Activated T-helper 1 cell treated with anti-CD3 and anti-CD28 coated beads, Interleukin-12 subunit alpha, Interleukin-12 subunit beta, Interleukin-2, Interleukin-4 antibody, amounts not matched to agents 30 ng/mL and 10 ng/mL and 1 ng/mL, durations not matched to agents 14 hours and 24 hours and 36 hours (primary cell): ENCODE measurements at regions of chr4 and their contacts with region 1.

Region 1: DNA sequence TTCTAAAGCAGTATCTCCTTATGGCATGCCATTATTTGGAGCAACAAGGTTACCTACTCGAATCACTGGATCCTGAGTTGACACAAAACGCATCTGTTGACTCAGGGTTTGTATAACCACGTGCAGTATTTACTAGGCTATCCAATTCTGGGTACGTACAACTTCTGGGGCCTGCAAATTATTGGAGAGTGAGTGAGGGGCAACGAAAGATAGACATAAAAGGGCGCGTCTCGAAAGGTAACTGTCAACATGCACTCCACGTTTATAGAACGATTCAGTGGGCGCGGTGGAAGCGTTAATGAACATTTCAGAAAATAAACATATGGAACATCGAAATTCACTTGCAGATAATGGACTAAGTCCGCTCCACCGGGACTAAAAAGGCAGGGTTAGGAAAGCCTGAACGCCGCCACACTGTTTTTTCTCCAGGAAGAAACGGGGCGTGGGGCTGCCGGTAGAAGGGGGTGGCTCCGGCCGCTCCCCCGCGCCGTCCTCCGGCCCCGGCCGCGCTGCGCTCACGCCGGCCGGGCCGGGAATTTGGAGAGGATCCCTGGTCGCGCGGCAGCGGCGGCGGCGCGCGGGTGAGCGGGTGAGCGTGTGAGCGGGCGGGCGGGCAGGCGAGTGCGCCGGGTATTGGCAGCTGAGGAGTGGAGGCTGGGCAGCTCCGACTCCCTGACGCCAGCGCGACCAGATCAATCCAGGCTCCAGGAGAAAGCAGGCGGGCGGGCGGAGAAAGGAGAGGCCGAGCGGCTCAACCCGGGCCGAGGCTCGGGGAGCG is at the start of gene SMAD1:
- DNase-seq: peak; percentile 11
- H3K4me3 Mint-ChIP-seq: peak within 1 kb of the TSS; percentile 73
- H3K27ac Mint-ChIP-seq: peak within 1 kb of the TSS; percentile 49
- H3K4me1 Mint-ChIP-seq: peaks cover 6% of the 10 kb centered on the region
- H3K27me3 Mint-ChIP-seq: peaks cover 33% of the 10 kb centered on the region
- total RNA-seq, gene SMAD1: 3.1 and 3.2 TPM in 2 replicates

Region 2: DNA sequence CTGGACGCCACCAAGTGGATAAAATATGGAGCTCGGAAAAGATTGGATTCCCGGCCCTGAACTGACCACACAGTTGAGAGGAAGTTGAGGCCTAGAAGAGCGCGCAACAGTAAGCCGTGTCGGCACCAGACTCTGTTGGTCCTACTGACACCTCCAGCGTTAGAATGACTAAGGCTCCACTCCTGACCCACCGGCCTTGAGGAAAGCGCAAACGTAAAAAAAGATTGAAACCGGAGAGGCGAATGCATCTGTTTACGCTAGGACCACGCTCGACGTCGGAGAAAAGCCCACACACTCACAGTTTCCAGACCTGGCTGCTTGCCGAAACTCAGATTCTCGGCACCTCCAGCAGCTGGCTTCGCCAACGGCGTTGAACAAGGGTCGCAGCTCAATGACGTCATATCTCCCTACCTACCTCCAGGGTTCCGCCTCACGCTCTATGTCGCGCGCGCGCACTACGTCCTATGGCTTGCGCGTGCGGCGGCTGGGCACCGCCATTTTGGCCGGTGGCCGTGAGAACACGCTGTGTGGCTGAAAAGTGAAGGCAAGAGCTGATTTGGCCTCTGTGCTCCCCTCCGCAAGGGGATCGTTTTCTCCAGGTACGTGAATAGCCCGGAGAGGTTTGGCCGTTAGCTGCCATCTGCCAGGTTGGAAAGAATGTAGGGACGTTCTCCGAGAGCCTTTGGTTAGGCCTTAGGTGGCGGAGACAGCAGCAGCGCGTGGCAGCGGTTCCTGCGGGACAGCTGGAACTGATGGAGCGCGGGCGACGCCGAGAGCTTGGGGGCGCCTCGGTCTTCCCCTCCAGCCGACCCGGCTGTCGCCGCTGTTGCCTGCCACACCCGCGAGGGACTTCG is 383.3 kb before region 1 on chr4 and contains the starts of genes ABCE1 and ANAPC10:
- intact Hi-C with region 1: loop called (anchors 2 kb)
- DNase-seq: peak; percentile 94
- H3K4me3 Mint-ChIP-seq: peak within 1 kb of the TSS; percentile 92
- H3K27ac Mint-ChIP-seq: peak within 1 kb of the TSS; percentile 100
- H3K4me1 Mint-ChIP-seq: peaks cover 27% of the 10 kb centered on the region
- H3K27me3 Mint-ChIP-seq: no peaks in the 10 kb centered on the region
- total RNA-seq, gene ABCE1: 155 and 176 TPM in 2 replicates
- total RNA-seq, gene ANAPC10: 25.4 and 32.1 TPM in 2 replicates

Region 3: DNA sequence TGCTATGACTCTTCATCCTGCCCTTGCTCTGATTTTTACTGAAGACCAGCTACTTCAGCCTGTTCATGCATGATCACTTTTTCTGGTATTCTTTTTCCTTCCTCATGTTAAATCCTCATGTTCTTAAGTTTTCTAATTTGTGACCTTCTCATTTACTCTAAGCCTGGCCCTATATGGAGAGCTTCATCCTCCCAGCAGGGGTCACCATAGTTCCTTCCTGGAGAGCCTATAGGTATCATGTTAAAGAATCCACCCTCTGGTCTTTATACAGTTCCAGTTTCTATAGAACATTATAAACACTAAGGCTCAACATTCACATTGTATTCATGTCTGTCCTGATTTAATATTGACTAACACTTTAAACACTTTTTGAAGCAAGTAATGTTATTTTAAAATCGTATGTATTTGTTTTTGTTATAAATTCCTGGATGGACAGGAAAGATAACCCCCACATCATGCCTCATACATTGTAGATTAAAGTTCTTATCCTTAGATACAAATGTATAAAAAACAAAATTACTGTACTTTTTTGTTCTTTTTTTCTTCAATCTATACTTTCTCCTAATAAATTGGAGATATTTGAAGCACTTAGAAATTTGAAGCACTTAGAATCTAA is 247.2 kb before region 1 on chr4:
- intact Hi-C with region 1: loop called (anchors 5 kb)
- DNase-seq: peak; percentile 20
- H3K4me3 Mint-ChIP-seq: no peak overlapping the region
- H3K27ac Mint-ChIP-seq: no peak overlapping the region
- H3K4me1 Mint-ChIP-seq: no peaks in the 10 kb centered on the region
- H3K27me3 Mint-ChIP-seq: peaks cover 7% of the 10 kb centered on the region

Region 4: GRCh38 chr4:145299380-145300076 is 181.8 kb before region 1 on chr4:
- intact Hi-C with region 1: loop called (anchors 1 kb)
- DNase-seq: peak; percentile 2
- H3K4me3 Mint-ChIP-seq: no peak overlapping the region
- H3K27ac Mint-ChIP-seq: no peak overlapping the region
- H3K4me1 Mint-ChIP-seq: peaks cover 17% of the 10 kb centered on the region
- H3K27me3 Mint-ChIP-seq: peaks cover 6% of the 10 kb centered on the region

Region 5: DNA sequence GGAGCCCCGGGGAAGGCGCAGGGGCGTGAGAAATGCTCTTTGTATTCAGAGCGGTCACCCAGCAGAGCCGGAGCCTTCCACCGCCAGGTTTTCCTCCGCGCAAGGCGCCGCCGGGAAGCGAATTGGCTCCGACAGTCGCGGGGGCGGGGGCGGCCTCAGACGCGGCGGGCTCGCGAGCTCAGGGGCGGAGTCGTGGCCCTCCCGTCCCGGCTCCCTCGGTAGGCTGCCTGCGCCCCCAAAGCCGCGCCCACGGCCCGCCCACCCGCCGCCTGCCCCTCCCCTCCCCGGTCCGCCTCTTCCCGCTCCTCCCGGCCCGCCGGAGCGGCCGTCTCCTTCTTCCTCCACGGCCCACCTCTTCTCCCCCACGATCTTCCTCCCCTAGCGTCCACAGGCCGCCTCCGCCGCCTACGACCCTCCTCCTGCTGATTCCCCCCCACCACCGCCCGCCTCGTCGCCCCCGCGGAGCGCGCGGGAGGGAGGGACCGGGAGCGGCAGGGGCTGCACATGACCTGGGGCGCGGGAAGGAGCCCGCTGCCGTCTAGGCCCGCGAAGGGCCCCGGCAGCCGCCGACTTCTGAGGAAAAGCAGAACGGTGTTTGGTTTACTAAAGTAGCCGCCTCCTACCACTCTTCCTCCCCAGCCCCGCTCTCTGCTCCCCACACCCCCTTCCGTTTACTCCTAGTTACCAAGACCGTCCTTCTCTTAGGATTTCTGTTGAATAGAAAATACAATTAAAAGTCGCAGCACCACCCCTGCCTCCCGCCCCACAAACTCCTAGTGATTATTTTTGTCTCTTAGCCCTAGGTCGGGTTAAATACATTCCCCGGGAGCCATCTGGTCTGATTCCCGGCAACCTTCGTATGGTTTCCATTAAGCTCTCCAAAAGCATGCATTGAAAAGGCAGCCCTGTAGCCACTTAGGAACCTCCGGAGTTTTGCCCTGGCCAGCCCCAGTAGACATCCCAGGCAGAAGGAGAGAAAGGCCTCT is 251.8 kb after region 1 on chr4:
- intact Hi-C with region 1: loop called (anchors 10 kb)
- DNase-seq: peak; percentile 82
- H3K4me3 Mint-ChIP-seq: peak overlapping the region; percentile 79
- H3K27ac Mint-ChIP-seq: peak overlapping the region; percentile 24
- H3K4me1 Mint-ChIP-seq: peaks cover 10% of the 10 kb centered on the region
- H3K27me3 Mint-ChIP-seq: peaks cover 3% of the 10 kb centered on the region

Region 6: GRCh38 chr4:146175541-146176453 is 694.4 kb after region 1 on chr4 and contains the start of gene LSM6:
- intact Hi-C with region 1: loop called (anchors 2 kb)
- DNase-seq: peak; percentile 77
- H3K4me3 Mint-ChIP-seq: peak within 1 kb of the TSS; percentile 88
- H3K27ac Mint-ChIP-seq: peak within 1 kb of the TSS; percentile 81
- H3K4me1 Mint-ChIP-seq: peaks cover 40% of the 10 kb centered on the region
- H3K27me3 Mint-ChIP-seq: no peaks in the 10 kb centered on the region
- total RNA-seq, gene LSM6: 62.9 and 65.0 TPM in 2 replicates